T-cell (primary cell): ENCODE measurements at regions of chr12 and their contacts with region 1.

Region 1: GRCh38 chr12:78519422-78519821 is 345.2 kb upstream of the SYT1 start:
- DNase-seq: no peak
- ATAC-seq: no peak
- H3K4me3 ChIP-seq: no peak overlapping the region
- H3K4me3 Mint-ChIP-seq: no peak overlapping the region
- H3K27ac ChIP-seq: no peak overlapping the region
- H3K27ac Mint-ChIP-seq: no peak overlapping the region
- H3K4me1 ChIP-seq: no peaks in the 10 kb centered on the region
- H3K4me1 Mint-ChIP-seq: no peaks in the 10 kb centered on the region
- H3K27me3 ChIP-seq: no peaks in the 10 kb centered on the region
- H3K27me3 Mint-ChIP-seq: no peaks in the 10 kb centered on the region

Region 2: DNA sequence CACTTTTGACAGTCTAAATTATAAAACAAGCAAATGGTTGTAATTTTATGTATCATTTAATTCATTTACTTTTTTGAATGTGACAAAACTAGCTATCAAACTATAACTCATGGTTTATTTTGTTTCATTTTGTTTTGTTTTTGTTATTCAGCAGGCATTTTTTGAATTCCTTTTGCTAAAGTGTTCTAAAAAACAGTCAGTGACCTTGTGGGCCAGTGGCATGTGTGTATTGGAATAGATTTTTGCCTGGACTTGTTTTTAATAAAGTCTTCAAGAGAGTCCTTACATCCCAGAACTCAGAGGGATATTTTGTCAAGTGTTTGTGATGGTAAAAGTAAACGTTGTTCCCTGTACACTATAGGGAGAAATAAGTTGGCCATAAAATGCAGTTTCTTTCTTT is 24.5 kb before region 1 on chr12:
- CTCF ChIA-PET with region 1: no interaction called
- POLR2A ChIA-PET with region 1: interaction called in 1 of 2 experiments, 10 read pairs
- DNase-seq: no peak
- ATAC-seq: no peak
- H3K4me3 ChIP-seq: no peak overlapping the region
- H3K4me3 Mint-ChIP-seq: no peak overlapping the region
- H3K27ac ChIP-seq: no peak overlapping the region
- H3K27ac Mint-ChIP-seq: no peak overlapping the region
- H3K4me1 ChIP-seq: no peaks in the 10 kb centered on the region
- H3K4me1 Mint-ChIP-seq: no peaks in the 10 kb centered on the region
- H3K27me3 ChIP-seq: no peaks in the 10 kb centered on the region
- H3K27me3 Mint-ChIP-seq: no peaks in the 10 kb centered on the region

Region 3: GRCh38 chr12:78540606-78541336 is 21.3 kb after region 1 on chr12:
- CTCF ChIA-PET with region 1: no interaction called
- POLR2A ChIA-PET with region 1: no interaction called
- DNase-seq: no peak
- ATAC-seq: no peak
- H3K4me3 ChIP-seq: no peak overlapping the region
- H3K4me3 Mint-ChIP-seq: no peak overlapping the region
- H3K27ac ChIP-seq: no peak overlapping the region
- H3K27ac Mint-ChIP-seq: no peak overlapping the region
- H3K4me1 ChIP-seq: no peaks in the 10 kb centered on the region
- H3K4me1 Mint-ChIP-seq: no peaks in the 10 kb centered on the region
- H3K27me3 ChIP-seq: no peaks in the 10 kb centered on the region
- H3K27me3 Mint-ChIP-seq: no peaks in the 10 kb centered on the region